Breast epithelium (tissue), 4 donors: ENCODE measurements at regions of chr3 and their contacts with region 1.

Region 1: GRCh38 chr3:39744746-39745145 is 64.7 kb upstream of the MYRIP start:
- DNase-seq: no peak
- H3K4me3 ChIP-seq: no peak overlapping the region
- H3K27ac ChIP-seq: no peak overlapping the region
- H3K4me1 ChIP-seq: no peaks in the 10 kb centered on the region
- H3K27me3 ChIP-seq: no peaks in the 10 kb centered on the region
- CTCF ChIP-seq: no peak
- POLR2A ChIP-seq: no peak

Region 2: GRCh38 chr3:39718674-39719595 is 25.8 kb before region 1 on chr3:
- intact Hi-C with region 1: no loop called
- DNase-seq: no peak
- H3K4me3 ChIP-seq: no peak overlapping the region
- H3K27ac ChIP-seq: no peak overlapping the region
- H3K4me1 ChIP-seq: no peaks in the 10 kb centered on the region
- H3K27me3 ChIP-seq: no peaks in the 10 kb centered on the region
- CTCF ChIP-seq: no peak
- POLR2A ChIP-seq: no peak

Region 3: DNA sequence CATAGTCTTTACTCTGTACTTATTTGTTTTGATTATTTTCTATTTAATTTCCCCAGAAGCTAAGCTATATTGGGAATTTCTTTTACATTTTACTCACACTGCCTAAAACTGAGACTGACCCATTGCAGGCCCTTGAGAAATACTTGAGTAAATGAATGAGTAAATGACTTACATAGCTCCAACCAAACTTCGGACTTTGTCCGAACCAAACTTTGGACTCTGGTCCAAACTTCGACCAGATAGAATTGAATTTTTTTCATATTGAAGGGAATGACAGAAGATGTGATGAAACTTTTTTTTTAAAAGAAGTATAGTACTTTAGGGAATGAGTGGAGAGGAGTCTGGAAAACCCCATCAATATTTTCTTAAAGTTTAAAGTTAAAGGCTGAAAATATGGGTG is 10.9 kb before region 1 on chr3:
- intact Hi-C with region 1: no loop called
- DNase-seq: no peak
- H3K4me3 ChIP-seq: no peak overlapping the region
- H3K27ac ChIP-seq: no peak overlapping the region
- H3K4me1 ChIP-seq: no peaks in the 10 kb centered on the region
- H3K27me3 ChIP-seq: no peaks in the 10 kb centered on the region
- CTCF ChIP-seq: no peak
- POLR2A ChIP-seq: no peak

Region 4: GRCh38 chr3:39801216-39801615 is 56.5 kb after region 1 on chr3:
- intact Hi-C with region 1: loop called (anchors 2 kb)
- DNase-seq: no peak
- H3K4me3 ChIP-seq: no peak overlapping the region
- H3K27ac ChIP-seq: no peak overlapping the region
- H3K4me1 ChIP-seq: no peaks in the 10 kb centered on the region
- H3K27me3 ChIP-seq: no peaks in the 10 kb centered on the region
- CTCF ChIP-seq: no peak
- POLR2A ChIP-seq: no peak